HCT116 (cell line): ENCODE measurements at regions of chr18 and their contacts with region 1.

Region 1: DNA sequence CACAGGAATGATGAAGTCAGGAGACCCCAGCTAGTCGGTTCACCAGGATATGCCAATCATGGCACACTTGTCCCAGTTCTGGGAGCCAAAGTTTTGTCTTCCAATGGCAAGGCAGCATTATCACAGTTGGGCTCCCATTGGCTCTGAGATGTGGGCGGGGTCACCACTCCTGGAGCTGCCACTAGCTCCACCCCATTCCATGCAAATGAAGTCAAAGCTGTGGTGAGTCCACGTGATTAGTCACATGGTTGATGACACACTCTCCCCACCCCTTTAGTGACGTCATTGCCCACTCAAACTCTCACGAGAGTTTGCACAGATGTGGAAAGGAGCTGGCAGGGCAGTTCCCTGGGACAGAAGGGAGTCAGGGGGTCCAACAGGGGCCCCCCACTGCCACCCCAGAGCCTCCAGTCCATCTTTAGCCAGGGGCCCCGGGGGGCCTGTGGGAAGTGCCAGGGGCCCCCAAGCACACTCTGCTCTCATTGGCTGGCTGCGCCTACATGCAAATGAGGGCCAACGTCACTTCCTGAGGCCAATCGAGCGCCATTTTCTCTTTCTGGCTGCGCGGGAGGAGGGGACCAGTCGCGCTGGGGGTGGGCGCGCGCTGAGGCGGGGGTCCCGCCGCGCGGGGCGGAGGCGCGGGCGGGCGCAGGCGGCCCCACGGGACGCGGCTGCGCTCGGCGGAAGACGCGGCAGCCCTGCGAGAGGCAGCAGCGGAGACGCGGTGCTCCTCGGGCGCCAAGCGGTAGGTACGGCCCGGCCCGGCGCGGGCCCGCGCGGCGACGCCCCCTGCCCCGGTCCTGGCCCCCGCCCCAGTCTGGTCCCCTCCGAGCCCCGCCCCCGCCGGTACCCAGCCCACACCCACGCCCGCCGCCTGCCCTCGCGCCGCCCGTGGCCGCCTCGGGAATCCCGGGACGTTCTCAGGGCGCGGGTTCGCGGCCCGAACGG is at the start of gene ADNP2:
- DNase-seq: peak; percentile 97
- ATAC-seq: peak; percentile 87
- H3K4me3 ChIP-seq: peak within 1 kb of the TSS; percentile 83 to 90
- H3K27ac ChIP-seq: peak within 1 kb of the TSS; percentile 84
- H3K4me1 ChIP-seq: peaks cover 2 to 20% of the 10 kb centered on the region in 2 experiments; a peak in 2 of 4 replicates
- H3K27me3 ChIP-seq: no peaks in the 10 kb centered on the region
- CTCF ChIP-seq: no peak
- POLR2A ChIP-seq: peak; percentile 60
- RAD21 ChIP-seq: no peak
- total RNA-seq, gene ADNP2: 45.4 TPM

Region 2: DNA sequence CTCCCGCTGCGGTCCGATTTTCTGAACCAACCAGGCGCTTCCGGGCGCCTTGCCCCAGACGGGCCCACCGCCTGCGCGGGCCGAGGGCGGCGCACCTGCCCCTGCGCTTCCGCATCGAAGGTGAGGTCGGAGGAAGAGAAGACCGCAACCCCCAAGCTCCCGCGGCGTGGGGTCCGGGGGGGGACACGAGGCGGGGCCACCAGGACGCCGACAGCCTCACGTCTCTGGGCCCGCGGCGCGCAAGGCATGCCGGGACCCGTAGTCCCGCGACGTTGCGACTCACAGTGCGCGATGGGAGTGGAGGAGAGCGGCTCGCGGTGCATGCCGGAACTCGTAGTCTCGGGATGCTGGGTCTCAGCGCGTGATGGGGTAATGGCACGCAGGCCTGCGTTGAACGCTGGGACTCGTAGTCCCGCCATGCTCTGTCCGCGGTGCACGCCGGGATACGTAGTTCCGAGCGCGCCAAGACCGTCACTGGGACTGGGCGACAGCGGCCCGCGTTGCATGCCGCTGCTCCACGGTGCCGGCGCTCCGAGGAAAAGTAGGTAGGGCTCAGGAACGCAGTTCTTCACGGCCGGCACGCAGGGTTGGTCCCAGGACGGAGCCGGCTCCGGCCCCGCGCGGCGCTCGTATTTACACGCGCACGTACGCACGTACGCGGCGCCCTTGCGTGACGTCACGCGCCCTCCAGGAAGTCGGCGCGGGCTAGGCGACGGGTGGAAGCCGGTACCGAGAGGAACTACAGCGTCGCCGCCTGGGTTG is 429.7 kb before region 1 on chr18 and contains the start of gene CTDP1:
- CTCF ChIA-PET with region 1: no interaction called
- POLR2A ChIA-PET with region 1: no interaction called
- RAD21 ChIA-PET with region 1: no interaction called
- intact Hi-C with region 1: loop called (anchors 5 kb)
- DNase-seq: peak; percentile 97
- ATAC-seq: peak; percentile 93
- H3K4me3 ChIP-seq: peak within 1 kb of the TSS; percentile 87 to 88
- H3K27ac ChIP-seq: peak within 1 kb of the TSS; percentile 94
- H3K4me1 ChIP-seq: peaks cover 11 to 21% of the 10 kb centered on the region in 2 experiments; a peak in 3 of 4 replicates
- H3K27me3 ChIP-seq: no peaks in the 10 kb centered on the region
- CTCF ChIP-seq: no peak
- POLR2A ChIP-seq: peak; percentile 63
- RAD21 ChIP-seq: no peak
- total RNA-seq, gene CTDP1: 24.9 TPM

Region 3: DNA sequence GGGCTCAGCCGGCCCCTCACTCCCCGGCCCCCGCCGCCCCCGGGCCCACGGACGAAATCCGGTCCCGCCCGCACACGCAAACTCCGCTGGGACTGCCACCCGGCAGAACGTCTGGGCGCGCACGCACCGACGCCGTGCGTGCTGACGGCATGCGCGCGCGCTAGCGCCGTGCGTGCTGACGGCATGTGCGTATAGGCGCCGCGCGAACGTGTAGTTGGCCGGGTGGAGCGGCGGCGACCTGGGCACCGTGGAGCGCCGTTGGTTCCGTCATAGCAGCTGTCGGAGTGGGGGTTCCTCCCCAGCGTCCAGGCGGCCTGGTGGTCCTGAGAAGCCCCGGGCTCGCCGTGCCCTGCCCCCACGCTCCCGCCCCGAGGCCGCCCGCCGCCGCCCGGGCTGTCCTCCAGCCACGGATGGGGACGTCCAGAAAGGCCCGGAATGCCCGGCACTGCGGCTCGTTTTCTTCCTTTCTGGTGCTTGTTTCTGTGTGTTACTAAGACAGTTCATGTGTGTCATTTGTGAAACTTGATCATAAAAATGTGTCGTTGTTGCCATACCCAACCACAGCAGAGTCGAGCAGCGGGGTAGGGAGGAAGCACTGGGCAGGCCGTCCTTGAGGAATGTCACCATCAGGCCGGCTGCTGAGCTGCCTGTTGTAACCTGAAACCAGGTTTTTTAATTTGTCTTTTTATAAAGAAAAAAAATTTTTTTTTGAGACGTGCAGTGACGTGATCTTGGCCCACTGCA is 120.4 kb before region 1 on chr18 and contains the start of gene TXNL4A:
- CTCF ChIA-PET with region 1: no interaction called
- POLR2A ChIA-PET with region 1: no interaction called
- RAD21 ChIA-PET with region 1: no interaction called
- intact Hi-C with region 1: loop called (anchors 10 kb)
- DNase-seq: no peak
- ATAC-seq: peak; percentile 96
- H3K4me3 ChIP-seq: peak within 1 kb of the TSS; percentile 59 to 83
- H3K27ac ChIP-seq: peak within 1 kb of the TSS; percentile 97
- H3K4me1 ChIP-seq: peaks cover 8 to 23% of the 10 kb centered on the region in 2 experiments
- H3K27me3 ChIP-seq: no peaks in the 10 kb centered on the region
- CTCF ChIP-seq: no peak
- POLR2A ChIP-seq: peak; percentile 89
- RAD21 ChIP-seq: no peak
- total RNA-seq, gene TXNL4A: 178 TPM

Region 4: DNA sequence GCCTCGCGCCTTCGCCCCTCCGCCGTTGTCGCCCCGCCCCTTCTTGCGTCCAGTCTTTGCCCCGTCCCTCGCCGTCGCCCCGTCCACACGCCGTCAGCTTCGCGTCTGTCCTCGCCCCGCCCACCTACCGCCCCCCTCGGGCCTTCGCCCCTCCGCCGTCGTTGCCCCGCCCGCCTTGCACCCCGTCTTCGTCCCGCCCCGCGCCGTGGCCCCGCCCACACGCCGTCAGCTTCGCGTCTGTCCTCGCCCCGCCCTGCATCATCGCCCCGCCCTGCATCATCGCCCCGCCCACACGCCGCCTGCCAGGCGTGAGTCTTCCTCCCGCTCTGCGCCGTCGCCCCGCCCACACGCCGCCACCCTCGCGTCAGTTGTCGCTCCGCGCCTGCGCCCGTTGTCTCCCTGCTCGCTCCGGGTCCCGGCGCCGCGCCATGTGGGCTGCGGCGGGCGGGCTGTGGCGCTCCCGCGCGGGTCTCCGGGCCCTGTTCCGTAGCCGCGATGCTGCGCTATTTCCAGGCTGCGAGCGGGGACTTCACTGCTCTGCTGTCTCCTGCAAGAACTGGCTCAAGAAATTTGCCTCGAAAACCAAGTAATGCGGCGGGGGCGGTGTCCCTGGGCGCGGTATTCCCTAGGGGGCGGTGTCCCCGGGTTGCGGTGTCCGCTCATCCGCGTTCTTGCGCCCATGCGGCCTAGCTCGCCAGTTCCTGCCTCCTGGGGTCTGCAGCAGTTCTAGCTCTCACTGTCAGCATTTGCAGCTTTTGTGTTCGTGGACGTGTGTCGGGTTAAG is 74.7 kb before region 1 on chr18 and contains the start of gene RBFA:
- CTCF ChIA-PET with region 1: interaction called, 3 read pairs
- POLR2A ChIA-PET with region 1: interaction called, 5 read pairs
- RAD21 ChIA-PET with region 1: no interaction called
- intact Hi-C with region 1: loop called (anchors 2 kb)
- DNase-seq: peak; percentile 94
- ATAC-seq: peak; percentile 87
- H3K4me3 ChIP-seq: peak within 1 kb of the TSS; percentile 72 to 89
- H3K27ac ChIP-seq: peak within 1 kb of the TSS; percentile 72
- H3K4me1 ChIP-seq: peaks cover 8 to 17% of the 10 kb centered on the region in 2 experiments; a peak in 3 of 4 replicates
- H3K27me3 ChIP-seq: no peaks in the 10 kb centered on the region
- CTCF ChIP-seq: peak in 2 of 3 experiments; percentile 45 to 53; a peak in 4 of 6 replicates
- POLR2A ChIP-seq: peak; percentile 86
- RAD21 ChIP-seq: peak; percentile 31; the same call in 1 of the 2 replicates
- total RNA-seq, gene RBFA: 45.3 TPM